Activated CD4-positive, alpha-beta T cell treated with anti-CD3 and anti-CD28 coated beads, Interleukin-2, amount 10 ng/mL, durations not matched to agents 7 days and 5 days (primary cell): ENCODE measurements at regions of chr16 and their contacts with region 1.

Region 1: DNA sequence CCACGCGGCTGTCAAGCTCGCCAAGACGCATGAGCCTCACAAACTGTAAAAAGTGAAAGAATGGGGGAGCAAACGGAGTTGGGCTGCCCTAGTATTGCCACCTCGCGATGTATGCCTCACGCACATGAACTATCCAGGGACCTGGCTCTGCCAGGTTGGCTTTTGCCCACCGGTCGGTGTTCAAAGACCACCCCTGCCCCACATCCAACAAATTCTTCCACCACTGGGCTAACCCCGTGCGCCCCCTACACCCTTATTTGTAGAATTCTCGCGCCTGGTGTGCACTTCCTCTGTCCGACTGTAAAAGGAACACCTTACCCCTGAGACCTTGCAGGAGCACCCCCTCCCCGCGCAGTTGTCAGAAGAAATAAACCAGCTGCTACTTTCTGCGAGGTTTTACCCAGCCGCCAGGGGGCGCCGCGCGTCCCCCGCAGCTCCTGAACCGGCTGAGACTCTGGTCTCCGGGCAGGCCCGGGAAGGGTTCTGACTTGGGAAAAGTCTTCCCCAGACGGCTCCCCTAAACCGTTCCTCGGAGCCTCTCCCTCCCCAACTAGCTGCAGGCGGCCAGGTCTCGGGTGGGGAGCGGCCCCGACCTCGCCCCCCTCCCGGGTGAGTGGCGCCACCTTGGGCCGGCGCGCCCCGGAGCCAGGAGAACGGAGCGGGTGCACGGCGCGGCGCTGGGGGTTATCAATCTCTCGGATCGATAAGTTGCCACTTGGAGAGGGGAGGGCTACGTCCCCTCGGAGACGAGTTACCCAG is 1.7 kb upstream of the ZNF423 start:
- DNase-seq: peak; percentile 47
- H3K4me3 Mint-ChIP-seq: peak overlapping the region; percentile 61
- H3K27ac Mint-ChIP-seq: no peak overlapping the region
- H3K4me1 Mint-ChIP-seq: peaks cover 13% of the 10 kb centered on the region
- H3K27me3 Mint-ChIP-seq: peaks cover 63% of the 10 kb centered on the region

Region 2: GRCh38 chr16:49834531-49835151 is 23.0 kb before region 1 on chr16:
- CTCF ChIA-PET with region 1: no interaction called
- POLR2A ChIA-PET with region 1: no interaction called
- DNase-seq: no peak
- H3K4me3 Mint-ChIP-seq: no peak overlapping the region
- H3K27ac Mint-ChIP-seq: no peak overlapping the region
- H3K4me1 Mint-ChIP-seq: no peaks in the 10 kb centered on the region
- H3K27me3 Mint-ChIP-seq: peaks cover 8% of the 10 kb centered on the region

Region 3: GRCh38 chr16:49876716-49877129 is 19.1 kb after region 1 on chr16:
- CTCF ChIA-PET with region 1: interaction called, 11 read pairs
- POLR2A ChIA-PET with region 1: no interaction called
- DNase-seq: peak; percentile 31
- H3K4me3 Mint-ChIP-seq: no peak overlapping the region
- H3K27ac Mint-ChIP-seq: no peak overlapping the region
- H3K4me1 Mint-ChIP-seq: no peaks in the 10 kb centered on the region
- H3K27me3 Mint-ChIP-seq: peaks cover 30% of the 10 kb centered on the region